Heart left ventricle (tissue), 16 donors: ENCODE measurements at regions of chr22 and their contacts with region 1.

Region 1: GRCh38 chr22:30277547-30278344 is 11.1 kb upstream of the OSM start:
- DNase-seq: no peak
- ATAC-seq: peak in 3 of 4 donors; percentile 61 to 77 (median 65)
- H3K4me3 ChIP-seq: peak overlapping the region in 1 of 12 donors; percentile 16
- H3K27ac ChIP-seq: peak overlapping the region in 8 of 12 donors; percentile 18 to 80 (median 51)
- H3K4me1 ChIP-seq: peaks cover 0 to 80% (median 7%) of the 10 kb centered on the region in 12 donors
- H3K27me3 ChIP-seq: no peaks in the 10 kb centered on the region
- CTCF ChIP-seq: no peak
- POLR2A ChIP-seq: no peak

Region 2: DNA sequence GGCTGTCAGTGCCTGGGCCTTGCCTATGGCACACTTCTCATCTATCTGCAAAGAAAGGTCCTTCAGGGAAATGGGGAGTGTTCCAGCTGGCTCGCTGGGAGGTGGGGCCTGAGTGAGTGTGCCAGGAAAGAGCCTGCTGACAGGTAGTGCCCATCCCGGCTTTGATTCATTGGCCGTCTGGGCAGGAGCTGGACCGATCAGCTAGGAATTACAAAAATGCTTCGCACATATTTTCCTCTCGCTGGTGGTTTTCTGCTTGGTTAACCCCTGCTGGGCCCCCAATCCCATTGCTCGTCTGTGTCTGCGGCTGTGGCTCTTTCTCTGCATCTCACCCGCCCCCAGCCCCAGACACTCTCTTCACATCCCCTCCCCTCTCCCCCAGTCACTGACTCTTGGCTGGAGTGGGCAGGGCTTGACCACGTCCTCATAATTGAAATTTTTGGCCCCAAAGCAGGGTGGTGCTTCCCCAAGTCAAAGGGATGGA is 42.0 kb before region 1 on chr22:
- intact Hi-C with region 1: loop called in 1 of 10 experiments (anchors 2 kb)
- DNase-seq: no peak
- ATAC-seq: peak in 2 of 4 donors; percentile 27 to 37
- H3K4me3 ChIP-seq: no peak overlapping the region
- H3K27ac ChIP-seq: no peak overlapping the region
- H3K4me1 ChIP-seq: no peaks in the 10 kb centered on the region
- H3K27me3 ChIP-seq: peaks cover 0 to 35% (median 11%) of the 10 kb centered on the region in 9 donors
- CTCF ChIP-seq: no peak
- POLR2A ChIP-seq: no peak

Region 3: DNA sequence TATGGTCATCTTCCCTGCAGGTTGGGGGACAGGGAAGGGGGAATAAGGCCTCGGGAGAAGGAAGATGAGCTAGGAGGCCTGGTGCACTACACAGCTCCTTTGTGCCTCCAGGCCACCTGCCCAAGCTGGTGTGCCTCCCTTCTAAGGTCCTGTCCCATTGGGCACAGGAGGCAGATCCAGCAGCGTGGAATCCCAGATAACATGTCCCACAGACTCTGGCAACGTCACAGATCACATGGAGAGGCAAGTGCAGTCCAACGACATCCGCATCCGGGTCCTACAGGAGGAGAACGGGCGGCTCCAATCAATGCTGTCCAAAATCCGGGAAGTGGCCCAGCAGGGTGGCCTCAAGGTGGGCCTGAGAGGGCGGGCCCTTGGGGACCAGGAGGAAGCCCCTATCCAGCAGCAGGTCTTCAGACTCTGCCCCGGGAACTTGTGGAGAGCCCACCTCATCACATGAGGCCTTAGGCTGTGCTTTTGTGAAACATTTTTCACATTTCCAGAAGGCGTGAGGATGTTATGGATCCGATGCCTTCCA is 97.6 kb after region 1 on chr22:
- intact Hi-C with region 1: loop called in 1 of 10 experiments (anchors 5 kb)
- DNase-seq: peak in 3 of 5 donors; percentile 41 to 67 (median 67)
- ATAC-seq: peak; percentile 40 to 69 (median 56)
- H3K4me3 ChIP-seq: no peak overlapping the region
- H3K27ac ChIP-seq: peak overlapping the region in 1 of 12 donors; percentile 58
- H3K4me1 ChIP-seq: peaks cover 0 to 9% (median 0%) of the 10 kb centered on the region in 12 donors
- H3K27me3 ChIP-seq: no peaks in the 10 kb centered on the region
- CTCF ChIP-seq: no peak
- POLR2A ChIP-seq: no peak